ENCODE measurements at regions of chr11 and their contacts with region 1.

Region 1: GRCh38 chr11:6505577-6506240 is 8.6 kb downstream of the DNHD1 start:
- DNase-seq: no peak
- ATAC-seq: peak; percentile 49 to 76 (median 72)
- H3K4me3 ChIP-seq: no peak overlapping the region
- H3K27ac ChIP-seq: no peak overlapping the region
- H3K4me1 ChIP-seq: no peaks in the 10 kb centered on the region
- H3K27me3 ChIP-seq: no peaks in the 10 kb centered on the region
- CTCF ChIP-seq: peak; percentile 73

Region 2: GRCh38 chr11:6377902-6378639 is 127.6 kb before region 1 on chr11:
- intact Hi-C with region 1: loop called (anchors 1 to 5 kb)
- DNase-seq: no peak
- ATAC-seq: no peak
- H3K4me3 ChIP-seq: no peak overlapping the region
- H3K27ac ChIP-seq: no peak overlapping the region
- H3K4me1 ChIP-seq: no peaks in the 10 kb centered on the region
- H3K27me3 ChIP-seq: no peaks in the 10 kb centered on the region
- CTCF ChIP-seq: no peak

Region 3: GRCh38 chr11:6443269-6444003 is 62.3 kb before region 1 on chr11:
- intact Hi-C with region 1: loop called in 1 of 2 experiments (anchors 2 kb)
- DNase-seq: peak; percentile 54 to 66
- ATAC-seq: peak; percentile 79 to 92 (median 84)
- H3K4me3 ChIP-seq: no peak overlapping the region
- H3K27ac ChIP-seq: no peak overlapping the region
- H3K4me1 ChIP-seq: no peaks in the 10 kb centered on the region
- H3K27me3 ChIP-seq: no peaks in the 10 kb centered on the region
- CTCF ChIP-seq: peak; percentile 75

Region 4: DNA sequence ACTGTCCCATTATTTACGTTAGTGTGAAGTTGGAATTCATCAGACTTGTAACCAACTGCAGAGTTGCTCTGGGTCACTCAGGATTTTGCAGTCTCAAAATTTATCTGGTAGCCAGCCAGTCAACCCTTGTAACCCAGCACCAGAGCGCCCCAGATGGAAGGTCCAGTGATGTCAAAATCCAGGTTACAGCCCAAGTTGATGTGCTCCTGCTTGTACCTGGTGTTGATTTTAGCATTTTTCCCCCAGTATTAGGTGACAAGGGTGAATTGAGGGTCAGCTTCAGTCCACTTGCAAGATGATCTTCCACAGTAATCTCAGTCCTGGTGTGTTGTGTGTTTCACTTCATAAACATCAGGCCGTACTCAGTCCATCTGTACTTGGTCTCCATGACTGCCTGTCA is 16.9 kb before region 1 on chr11:
- intact Hi-C with region 1: loop called in 1 of 2 experiments (anchors 1 kb)
- DNase-seq: no peak
- ATAC-seq: no peak
- H3K4me3 ChIP-seq: no peak overlapping the region
- H3K27ac ChIP-seq: no peak overlapping the region
- H3K4me1 ChIP-seq: no peaks in the 10 kb centered on the region
- H3K27me3 ChIP-seq: no peaks in the 10 kb centered on the region
- CTCF ChIP-seq: no peak

Region 5: DNA sequence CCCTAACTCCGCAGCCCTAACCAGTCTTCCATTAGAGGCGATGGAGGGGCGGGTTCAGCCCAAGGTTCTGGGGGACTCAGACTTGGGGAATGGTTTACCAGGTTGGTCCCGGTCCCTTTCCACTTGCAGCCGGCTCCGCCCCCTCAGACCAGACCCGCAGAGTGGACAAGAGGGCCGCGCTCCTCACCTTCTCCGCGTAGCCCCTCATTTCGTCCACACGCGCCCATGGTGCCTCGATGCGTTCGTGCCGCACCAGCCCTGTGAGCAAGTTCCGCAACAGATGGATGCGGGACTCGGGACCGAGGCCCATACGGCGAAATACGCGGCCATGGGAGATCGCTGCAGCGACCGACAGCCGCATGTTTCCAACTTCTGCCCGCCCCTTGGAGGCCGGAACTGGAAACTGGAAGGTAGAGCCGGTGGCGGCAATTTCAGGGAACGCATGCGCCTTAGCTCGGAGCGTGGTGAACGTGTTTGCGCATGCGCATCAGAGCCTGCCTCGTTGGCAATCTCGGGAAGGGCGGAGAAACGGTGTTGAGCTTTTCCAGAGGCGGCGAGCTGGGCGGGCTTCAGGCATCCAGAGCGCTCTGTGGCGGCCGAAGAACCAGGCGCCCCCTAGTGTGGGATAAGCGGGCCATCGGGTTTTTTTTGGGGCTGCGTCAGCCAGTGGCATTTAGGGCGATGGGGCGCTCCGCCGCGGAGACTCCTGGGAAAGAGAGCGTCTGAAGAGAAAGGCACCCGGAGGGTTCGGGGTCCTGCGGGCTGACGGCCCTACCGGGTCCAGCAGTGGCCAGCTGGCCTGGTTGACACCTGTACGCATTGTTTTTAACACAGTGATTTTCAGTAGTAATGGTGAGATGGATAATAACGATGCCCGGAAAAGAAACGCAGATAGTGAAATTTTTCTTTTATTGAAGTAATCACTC is 177.5 kb after region 1 on chr11 and contains the start of gene MRPL17:
- intact Hi-C with region 1: no loop called
- DNase-seq: peak; percentile 99 to 100
- ATAC-seq: peak; percentile 97 to 99 (median 98)
- H3K4me3 ChIP-seq: peak within 1 kb of the TSS; percentile 96
- H3K27ac ChIP-seq: peak within 1 kb of the TSS; percentile 82
- H3K4me1 ChIP-seq: peaks cover 14% of the 10 kb centered on the region
- H3K27me3 ChIP-seq: no peaks in the 10 kb centered on the region
- CTCF ChIP-seq: peak; percentile 85
- total RNA-seq, gene MRPL17: 27.2 to 44.8 (median 38.8) TPM